ENCODE measurements at regions of chr7 and their contacts with region 1.

Region 1: GRCh38 chr7:117362294-117362888 is 39.5 kb upstream of the WNT2 start:
- DNase-seq: no peak
- ATAC-seq: peak; percentile 80
- H3K4me3 ChIP-seq: no peak overlapping the region
- H3K27ac ChIP-seq: no peak overlapping the region
- H3K4me1 ChIP-seq: no peaks in the 10 kb centered on the region
- H3K27me3 ChIP-seq: no peaks in the 10 kb centered on the region
- CTCF ChIP-seq: no peak
- EP300 ChIP-seq: no peak
- POLR2A ChIP-seq: no peak
- RAD21 ChIP-seq: no peak

Region 2: GRCh38 chr7:117323851-117324701 is 38.3 kb before region 1 on chr7:
- CTCF ChIA-PET with region 1: interaction called, 3 read pairs
- POLR2A ChIA-PET with region 1: no interaction called
- RAD21 ChIA-PET with region 1: interaction called, 3 read pairs
- SMC1A ChIA-PET with region 1: interaction called, 14 read pairs
- in situ Hi-C with region 1: no loop called
- intact Hi-C with region 1: no loop called
- DNase-seq: no peak
- ATAC-seq: peak; percentile 64
- H3K4me3 ChIP-seq: peak overlapping the region; percentile 49
- H3K27ac ChIP-seq: no peak overlapping the region
- H3K4me1 ChIP-seq: no peaks in the 10 kb centered on the region
- H3K27me3 ChIP-seq: peaks cover 10 to 27% of the 10 kb centered on the region in 2 experiments
- CTCF ChIP-seq: no peak
- EP300 ChIP-seq: no peak
- POLR2A ChIP-seq: no peak
- RAD21 ChIP-seq: no peak